SK-N-SH (cell line): ENCODE measurements at regions of chr3 and their contacts with region 1.

Region 1: GRCh38 chr3:185659942-185660921 is 74.1 kb downstream of the SENP2 start:
- DNase-seq: peak; percentile 78
- H3K4me3 ChIP-seq: peak overlapping the region in 1 of 2 experiments; percentile 18; a peak in 1 of 4 replicates
- H3K27ac ChIP-seq: peak overlapping the region in 1 of 2 experiments; percentile 95; a peak in 2 of 4 replicates
- H3K4me1 ChIP-seq: peaks cover 3 to 52% of the 10 kb centered on the region in 2 experiments; a peak in 3 of 4 replicates
- H3K27me3 ChIP-seq: no peaks in the 10 kb centered on the region
- CTCF ChIP-seq: peak; percentile 99
- EP300 ChIP-seq: no peak
- RAD21 ChIP-seq: peak; percentile 92

Region 2: GRCh38 chr3:185488465-185488864 is 171.8 kb before region 1 on chr3:
- CTCF ChIA-PET with region 1: no interaction called
- POLR2A ChIA-PET with region 1: no interaction called
- DNase-seq: no peak
- H3K4me3 ChIP-seq: no peak overlapping the region
- H3K27ac ChIP-seq: no peak overlapping the region
- H3K4me1 ChIP-seq: no peaks in the 10 kb centered on the region
- H3K27me3 ChIP-seq: no peaks in the 10 kb centered on the region
- CTCF ChIP-seq: no peak
- EP300 ChIP-seq: no peak
- RAD21 ChIP-seq: no peak

Region 3: DNA sequence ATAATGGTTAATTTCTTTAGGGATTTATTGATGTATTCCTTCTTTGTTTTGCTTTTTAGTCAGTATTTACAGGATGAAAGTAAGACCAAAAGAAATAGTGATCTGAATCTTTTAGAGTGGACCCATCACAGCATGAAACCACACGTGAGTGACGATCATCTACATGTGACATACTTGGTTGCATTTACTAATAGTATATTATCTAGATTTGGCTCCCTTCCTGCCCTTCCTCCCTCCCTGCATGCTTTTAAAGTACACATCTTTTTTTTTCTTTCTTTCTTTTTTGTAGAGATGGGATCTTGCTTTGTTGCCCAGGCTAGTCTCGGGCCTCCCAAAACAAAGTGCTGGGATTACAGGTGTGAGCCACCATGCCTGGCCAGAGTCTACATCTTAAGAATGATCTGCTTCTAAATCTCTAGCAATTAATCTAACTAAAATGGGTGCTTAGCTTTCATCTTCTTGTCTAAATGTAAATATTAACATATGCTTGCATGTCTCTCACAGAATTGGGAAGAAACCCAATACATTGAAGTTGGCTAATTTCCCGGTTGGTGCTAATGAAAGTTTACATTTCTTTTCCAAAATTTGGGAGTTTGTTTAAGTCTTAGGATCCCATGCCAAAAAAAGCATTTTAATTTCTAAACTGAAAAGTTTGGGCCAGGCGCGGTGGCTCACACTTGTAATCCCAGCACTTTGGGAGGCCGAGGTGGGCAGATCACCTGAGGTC is 36.1 kb before region 1 on chr3:
- CTCF ChIA-PET with region 1: no interaction called
- POLR2A ChIA-PET with region 1: no interaction called
- DNase-seq: no peak
- H3K4me3 ChIP-seq: no peak overlapping the region
- H3K27ac ChIP-seq: no peak overlapping the region
- H3K4me1 ChIP-seq: no peaks in the 10 kb centered on the region
- H3K27me3 ChIP-seq: no peaks in the 10 kb centered on the region
- CTCF ChIP-seq: no peak
- EP300 ChIP-seq: no peak
- RAD21 ChIP-seq: no peak

Region 4: DNA sequence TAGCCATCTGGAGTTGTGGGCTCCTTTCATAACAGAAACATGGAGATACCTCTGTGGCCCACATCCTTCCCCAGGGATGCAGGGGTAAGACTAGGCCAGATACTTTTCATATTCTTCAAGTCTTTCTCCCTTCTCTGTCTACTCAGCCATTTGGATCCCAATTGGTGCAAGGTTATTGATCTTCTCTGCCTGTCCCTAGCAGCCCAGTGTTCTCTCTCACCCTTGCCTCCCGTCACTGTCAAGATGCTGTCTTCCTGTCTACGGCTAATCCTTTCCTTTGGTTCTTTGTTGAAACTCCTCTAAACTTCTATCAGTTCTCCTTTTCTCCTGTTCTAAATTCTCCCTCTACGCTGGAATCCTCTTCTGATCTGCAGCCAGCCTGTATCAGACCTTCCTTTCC is 22.8 kb before region 1 on chr3:
- CTCF ChIA-PET with region 1: interaction called, 23 read pairs
- POLR2A ChIA-PET with region 1: no interaction called
- DNase-seq: no peak
- H3K4me3 ChIP-seq: no peak overlapping the region
- H3K27ac ChIP-seq: no peak overlapping the region
- H3K4me1 ChIP-seq: 0 out of 4 replicates have a peak, but pooled peaks cover 0 to 8% of the 10 kb centered on the region in 2 experiments
- H3K27me3 ChIP-seq: no peaks in the 10 kb centered on the region
- CTCF ChIP-seq: no peak
- EP300 ChIP-seq: no peak
- RAD21 ChIP-seq: no peak

Region 5: GRCh38 chr3:185677146-185677829 is 17.1 kb after region 1 on chr3:
- CTCF ChIA-PET with region 1: interaction called, 57 read pairs
- POLR2A ChIA-PET with region 1: no interaction called
- DNase-seq: peak; percentile 56
- H3K4me3 ChIP-seq: no peak overlapping the region
- H3K27ac ChIP-seq: peak overlapping the region in 1 of 2 experiments; percentile 5; a peak in 1 of 4 replicates
- H3K4me1 ChIP-seq: no peaks in the 10 kb centered on the region
- H3K27me3 ChIP-seq: no peaks in the 10 kb centered on the region
- CTCF ChIP-seq: peak; percentile 81
- EP300 ChIP-seq: no peak
- RAD21 ChIP-seq: peak; percentile 68

Region 6: GRCh38 chr3:185733980-185734724 is 73.9 kb after region 1 on chr3:
- CTCF ChIA-PET with region 1: interaction called, 31 read pairs
- POLR2A ChIA-PET with region 1: no interaction called
- DNase-seq: peak; percentile 57
- H3K4me3 ChIP-seq: no peak overlapping the region
- H3K27ac ChIP-seq: peak overlapping the region in 1 of 2 experiments; percentile 99; a peak in 2 of 4 replicates
- H3K4me1 ChIP-seq: peaks cover 0 to 66% of the 10 kb centered on the region in 2 experiments; a peak in 3 of 4 replicates
- H3K27me3 ChIP-seq: no peaks in the 10 kb centered on the region
- CTCF ChIP-seq: peak; percentile 71
- EP300 ChIP-seq: no peak
- RAD21 ChIP-seq: peak; percentile 77

Region 7: GRCh38 chr3:185764163-185764979 is 104.1 kb after region 1 on chr3:
- CTCF ChIA-PET with region 1: interaction called, 194 read pairs
- POLR2A ChIA-PET with region 1: no interaction called
- DNase-seq: no peak
- H3K4me3 ChIP-seq: no peak overlapping the region
- H3K27ac ChIP-seq: peak overlapping the region in 1 of 2 experiments; percentile 53; a peak in 2 of 4 replicates
- H3K4me1 ChIP-seq: peaks cover 0 to 55% of the 10 kb centered on the region in 2 experiments
- H3K27me3 ChIP-seq: no peaks in the 10 kb centered on the region
- CTCF ChIP-seq: no peak
- EP300 ChIP-seq: no peak
- RAD21 ChIP-seq: no peak

Region 8: GRCh38 chr3:185976977-185977678 is 316.9 kb after region 1 on chr3:
- CTCF ChIA-PET with region 1: interaction called, 11 read pairs
- POLR2A ChIA-PET with region 1: no interaction called
- DNase-seq: peak; percentile 70
- H3K4me3 ChIP-seq: no peak overlapping the region; a peak in 1 of 4 replicates
- H3K27ac ChIP-seq: no peak overlapping the region
- H3K4me1 ChIP-seq: no peaks in the 10 kb centered on the region
- H3K27me3 ChIP-seq: no peaks in the 10 kb centered on the region
- CTCF ChIP-seq: peak; percentile 96
- EP300 ChIP-seq: no peak
- RAD21 ChIP-seq: peak; percentile 73